Activated CD4-positive, alpha-beta T cell treated with anti-CD3 and anti-CD28 coated beads, Interleukin-2, amount 10 ng/mL, durations not matched to agents 24 days and 14 days (primary cell): ENCODE measurements at regions of chrX and their contacts with region 1.

Region 1: GRCh38 chrX:7083468-7084396 is 63.8 kb upstream of the STS start:
- DNase-seq: peak; percentile 88
- H3K4me3 Mint-ChIP-seq: peak overlapping the region; percentile 56
- H3K27ac Mint-ChIP-seq: peak overlapping the region; percentile 89
- H3K4me1 Mint-ChIP-seq: peaks cover 31% of the 10 kb centered on the region
- H3K27me3 Mint-ChIP-seq: peaks cover 5% of the 10 kb centered on the region

Region 2: DNA sequence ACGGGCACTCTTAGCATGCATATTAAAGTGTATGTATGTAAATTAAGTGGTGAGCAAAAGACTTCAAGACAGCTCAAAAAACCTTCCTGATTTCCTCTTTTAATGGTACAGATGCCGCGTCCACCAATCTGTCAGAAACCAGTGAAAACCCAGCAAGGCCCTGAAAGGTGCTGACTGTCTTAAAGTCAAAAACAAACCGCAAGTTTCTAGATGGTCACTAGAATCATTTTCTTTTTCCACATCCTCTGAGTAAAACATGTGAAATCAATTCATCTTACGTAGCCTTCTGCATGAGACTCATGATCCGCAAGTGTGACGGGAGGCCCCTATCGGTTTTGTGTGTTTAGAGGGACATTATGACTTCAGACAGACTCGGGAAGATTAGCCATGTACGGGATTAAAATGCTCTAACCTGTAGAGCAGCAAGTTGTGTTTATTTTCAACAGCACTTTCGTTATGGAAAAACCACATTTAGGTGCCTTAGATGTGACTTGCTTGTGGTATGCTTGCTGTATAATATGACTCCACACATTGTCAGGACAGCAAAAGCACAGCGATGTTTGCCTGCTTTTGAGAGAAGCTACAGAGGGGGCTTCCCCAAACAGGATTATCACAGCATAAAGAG is 24.4 kb before region 1 on chrX:
- intact Hi-C with region 1: loop called (anchors 1 kb)
- DNase-seq: peak; percentile 62
- H3K4me3 Mint-ChIP-seq: no peak overlapping the region
- H3K27ac Mint-ChIP-seq: no peak overlapping the region
- H3K4me1 Mint-ChIP-seq: peaks cover 18% of the 10 kb centered on the region
- H3K27me3 Mint-ChIP-seq: no peaks in the 10 kb centered on the region